Ascending aorta (tissue), 2 donors: ENCODE measurements at regions of chr1 and their contacts with region 1.

Region 1: GRCh38 chr1:71049951-71050598 is 2.5 kb upstream of the PTGER3 start:
- DNase-seq: no peak
- H3K4me3 ChIP-seq: no peak overlapping the region
- H3K27ac ChIP-seq: no peak overlapping the region
- H3K4me1 ChIP-seq: peaks cover 0 to 4% of the 10 kb centered on the region in 2 donors
- H3K27me3 ChIP-seq: no peaks in the 10 kb centered on the region
- CTCF ChIP-seq: peak; percentile 63 to 83 (median 79)

Region 2: DNA sequence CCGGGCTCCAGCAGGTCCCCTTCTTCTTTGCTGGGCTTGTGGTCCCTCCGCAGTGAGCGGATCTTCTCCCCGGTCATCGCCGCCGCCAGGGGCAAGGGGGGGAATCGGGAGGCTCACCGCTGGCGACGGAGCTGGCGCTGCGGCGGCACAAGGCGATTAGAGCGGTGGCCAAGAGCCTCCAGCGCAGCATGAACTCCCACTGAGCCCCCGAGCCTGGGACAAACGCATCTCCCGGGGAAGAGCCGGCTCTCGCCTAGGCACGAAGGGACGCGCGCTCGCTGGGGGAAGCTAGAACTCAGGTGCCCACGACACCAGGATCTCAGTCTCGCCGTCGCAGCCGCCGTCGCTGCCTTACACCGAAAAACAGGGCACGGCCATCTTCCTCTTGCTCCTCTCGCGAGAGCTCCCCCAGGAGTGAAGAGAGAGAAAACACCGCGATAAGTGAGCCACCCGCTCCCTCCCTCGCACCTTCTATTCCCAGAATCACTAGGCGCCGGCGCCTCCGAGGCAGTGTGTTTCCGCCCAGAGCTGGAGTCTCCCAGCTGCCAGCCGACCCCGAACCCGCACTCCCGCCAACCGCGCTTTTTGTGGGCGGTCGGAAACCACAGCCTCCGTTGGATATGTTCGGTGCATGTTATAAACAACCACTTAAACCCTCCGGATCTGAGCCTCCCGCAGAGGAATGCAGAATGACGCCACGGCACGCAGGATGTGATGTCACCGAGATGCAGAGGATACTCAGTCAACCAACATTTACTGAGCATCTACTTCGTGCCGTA is 695.6 kb before region 1 on chr1 and contains the start of gene ANKRD13C:
- intact Hi-C with region 1: loop called (anchors 10 kb)
- DNase-seq: peak; percentile 86 to 98
- H3K4me3 ChIP-seq: peak within 1 kb of the TSS; percentile 82 to 92
- H3K27ac ChIP-seq: peak within 1 kb of the TSS; percentile 91 to 96
- H3K4me1 ChIP-seq: peaks cover 3 to 34% of the 10 kb centered on the region in 2 donors
- H3K27me3 ChIP-seq: no peaks in the 10 kb centered on the region
- CTCF ChIP-seq: no peak
- total RNA-seq, gene ANKRD13C: 30.2 TPM

Region 3: GRCh38 chr1:70685300-70686241 is 364.5 kb before region 1 on chr1:
- intact Hi-C with region 1: loop called (anchors 1 kb)
- DNase-seq: peak in 1 of 2 donors; percentile 77
- H3K4me3 ChIP-seq: no peak overlapping the region
- H3K27ac ChIP-seq: no peak overlapping the region
- H3K4me1 ChIP-seq: no peaks in the 10 kb centered on the region
- H3K27me3 ChIP-seq: no peaks in the 10 kb centered on the region
- CTCF ChIP-seq: peak; percentile 85 to 92 (median 88)

Region 4: GRCh38 chr1:70718086-70718630 is 331.9 kb before region 1 on chr1:
- intact Hi-C with region 1: loop called (anchors 10 kb)
- DNase-seq: no peak
- H3K4me3 ChIP-seq: no peak overlapping the region
- H3K27ac ChIP-seq: peak overlapping the region; percentile 47 to 50
- H3K4me1 ChIP-seq: peaks cover 3 to 14% of the 10 kb centered on the region in 2 donors
- H3K27me3 ChIP-seq: no peaks in the 10 kb centered on the region
- CTCF ChIP-seq: no peak

Region 5: GRCh38 chr1:70910013-70910412 is 140.1 kb before region 1 on chr1:
- intact Hi-C with region 1: no loop called
- DNase-seq: no peak
- H3K4me3 ChIP-seq: no peak overlapping the region
- H3K27ac ChIP-seq: no peak overlapping the region
- H3K4me1 ChIP-seq: no peaks in the 10 kb centered on the region
- H3K27me3 ChIP-seq: no peaks in the 10 kb centered on the region
- CTCF ChIP-seq: no peak

Region 6: DNA sequence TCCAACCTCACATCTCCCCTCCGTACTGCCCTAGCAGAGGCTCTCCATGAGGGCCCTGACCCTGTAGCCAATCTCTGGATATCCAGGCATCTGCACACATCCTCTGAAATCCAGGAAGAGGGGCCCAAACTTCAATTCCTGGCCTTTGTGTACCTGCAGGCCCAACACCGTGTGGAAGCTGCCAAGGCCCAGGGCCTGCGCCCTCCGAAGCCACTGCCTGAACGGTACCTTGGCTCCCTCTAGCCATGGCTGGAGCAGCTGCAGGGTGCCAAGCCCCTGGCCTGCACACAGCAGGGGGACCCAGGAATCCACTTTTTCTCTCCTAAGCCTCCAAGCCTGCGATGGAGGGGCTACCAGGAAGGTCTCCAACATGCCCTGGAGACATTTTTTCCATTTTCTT is 86.7 kb before region 1 on chr1:
- intact Hi-C with region 1: loop called (anchors 5 kb)
- DNase-seq: no peak
- H3K4me3 ChIP-seq: no peak overlapping the region
- H3K27ac ChIP-seq: no peak overlapping the region
- H3K4me1 ChIP-seq: no peaks in the 10 kb centered on the region
- H3K27me3 ChIP-seq: no peaks in the 10 kb centered on the region
- CTCF ChIP-seq: no peak

Region 7: GRCh38 chr1:70990469-70991253 is 59.4 kb before region 1 on chr1:
- intact Hi-C with region 1: loop called (anchors 10 kb)
- DNase-seq: no peak
- H3K4me3 ChIP-seq: no peak overlapping the region
- H3K27ac ChIP-seq: peak overlapping the region; percentile 5 to 19
- H3K4me1 ChIP-seq: peaks cover 0 to 14% of the 10 kb centered on the region in 2 donors
- H3K27me3 ChIP-seq: no peaks in the 10 kb centered on the region
- CTCF ChIP-seq: no peak

Region 8: GRCh38 chr1:71019233-71019969 is 30.7 kb before region 1 on chr1:
- intact Hi-C with region 1: loop called (anchors 2 kb)
- DNase-seq: no peak
- H3K4me3 ChIP-seq: no peak overlapping the region
- H3K27ac ChIP-seq: peak overlapping the region in 1 of 2 donors; percentile 44
- H3K4me1 ChIP-seq: peaks cover 0 to 23% of the 10 kb centered on the region in 2 donors
- H3K27me3 ChIP-seq: no peaks in the 10 kb centered on the region
- CTCF ChIP-seq: no peak

Region 9: DNA sequence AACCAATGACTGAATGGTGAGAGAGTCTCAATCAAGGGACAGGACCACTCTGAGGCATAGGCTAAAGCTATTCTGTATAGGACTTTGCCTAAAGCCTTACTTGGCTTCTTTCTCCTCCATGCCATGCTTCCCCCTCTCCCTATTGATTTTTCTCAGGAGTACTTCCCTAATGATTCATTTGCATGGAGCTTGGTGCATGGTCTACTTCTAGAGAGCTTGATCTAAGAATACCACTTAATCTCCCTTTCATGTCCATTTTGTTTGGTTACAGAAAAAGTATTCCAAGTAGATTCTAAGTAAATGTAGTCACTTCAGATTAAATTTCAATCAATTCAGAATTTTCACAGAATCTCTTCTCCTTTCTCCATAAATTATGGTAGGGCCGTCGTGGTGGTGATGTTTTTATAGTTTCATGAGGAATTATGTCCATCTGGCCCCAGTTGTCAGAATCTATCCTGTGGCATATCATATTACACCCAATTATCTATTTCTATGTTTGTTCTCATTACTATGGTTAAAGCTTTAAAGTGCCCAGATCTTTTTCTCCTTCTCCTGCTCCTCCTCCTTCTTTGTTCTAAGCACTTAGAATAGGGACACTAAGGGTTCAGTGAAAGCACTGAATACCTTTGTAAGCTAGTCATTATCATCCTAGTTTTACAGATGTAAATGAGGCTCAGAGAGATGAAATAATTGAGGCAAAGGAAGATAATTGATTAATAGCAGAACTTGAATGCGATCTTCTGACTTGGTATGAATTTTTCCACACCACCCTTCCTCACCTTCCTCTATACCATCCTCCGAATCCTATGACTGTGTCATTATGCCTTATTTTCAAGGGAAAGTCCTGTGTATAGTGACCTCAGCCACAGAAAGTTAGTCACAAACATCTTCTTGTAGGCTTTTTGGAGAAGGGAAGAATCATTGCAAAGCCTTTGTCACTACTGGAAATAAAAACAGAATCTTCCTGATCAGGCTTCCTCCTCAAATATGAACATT is 116.4 kb after region 1 on chr1:
- intact Hi-C with region 1: no loop called
- DNase-seq: no peak
- H3K4me3 ChIP-seq: no peak overlapping the region
- H3K27ac ChIP-seq: no peak overlapping the region
- H3K4me1 ChIP-seq: no peaks in the 10 kb centered on the region
- H3K27me3 ChIP-seq: no peaks in the 10 kb centered on the region
- CTCF ChIP-seq: no peak